ENCODE measurements at regions of chr11 and their contacts with region 1.

Region 1: GRCh38 chr11:65569973-65570918 is at the start of gene ZNRD2:
- DNase-seq: peak; percentile 99
- ATAC-seq: peak; percentile 70
- H3K4me3 ChIP-seq: peak within 1 kb of the TSS; percentile 79
- H3K27ac ChIP-seq: peak within 1 kb of the TSS; percentile 78
- H3K4me1 ChIP-seq: peaks cover 19% of the 10 kb centered on the region
- H3K27me3 ChIP-seq: no peaks in the 10 kb centered on the region
- CTCF ChIP-seq: peak; percentile 76
- POLR2A ChIP-seq: peak; percentile 73
- RAD21 ChIP-seq: peak; percentile 64
- total RNA-seq, gene ZNRD2: 69.7 and 75.6 TPM in 2 replicates

Region 2: DNA sequence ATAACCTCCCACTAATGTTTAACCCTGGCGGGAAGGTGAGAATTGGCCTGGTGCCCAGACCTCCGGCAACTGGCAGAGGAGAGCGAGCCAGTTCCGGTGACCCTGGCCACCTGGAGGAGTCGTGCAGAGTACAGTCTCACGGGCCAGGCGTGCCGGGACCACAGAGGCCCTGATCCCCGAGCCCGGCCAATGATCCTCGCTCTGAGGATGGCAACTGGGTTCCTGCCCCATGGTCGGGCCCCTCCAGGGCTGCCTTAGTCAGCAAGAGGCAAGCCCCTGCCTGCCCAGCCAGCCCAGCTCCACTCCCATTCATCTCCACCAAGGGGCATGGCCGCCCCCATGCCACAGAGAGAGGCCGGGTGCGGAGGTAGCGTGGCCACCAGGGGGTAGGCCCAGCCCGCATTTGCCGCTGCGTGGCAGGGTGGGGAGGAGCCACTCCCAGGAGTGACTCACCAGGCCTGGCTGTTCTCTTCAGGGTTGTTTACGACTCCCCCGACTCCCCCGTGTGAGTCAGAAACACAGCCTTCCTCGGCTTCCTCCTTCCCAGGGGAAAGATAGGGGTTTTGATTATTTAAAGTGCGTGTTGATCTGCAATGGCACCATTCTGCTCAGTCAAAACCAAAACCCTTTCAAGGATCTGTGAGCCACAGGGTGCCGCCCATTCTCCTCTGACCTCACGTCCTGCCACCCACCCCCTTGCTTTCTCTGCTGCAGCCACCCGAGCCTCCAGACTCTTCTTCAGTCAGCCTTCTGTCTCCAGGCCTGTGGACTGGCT is 188.0 kb before region 1 on chr11 and contains the start of gene SLC25A45:
- CTCF ChIA-PET with region 1: no interaction called
- POLR2A ChIA-PET with region 1: no interaction called
- dilution Hi-C with region 1: no loop called
- in situ Hi-C with region 1: no loop called
- intact Hi-C with region 1: loop called (anchors 5 kb)
- DNase-seq: peak; percentile 99
- ATAC-seq: peak; percentile 84
- H3K4me3 ChIP-seq: peak within 1 kb of the TSS; percentile 21
- H3K27ac ChIP-seq: peak within 1 kb of the TSS; percentile 89
- H3K4me1 ChIP-seq: peaks cover 27% of the 10 kb centered on the region
- H3K27me3 ChIP-seq: no peaks in the 10 kb centered on the region
- CTCF ChIP-seq: peak; percentile 88
- POLR2A ChIP-seq: peak; percentile 52; the same call in 1 of the 2 replicates
- RAD21 ChIP-seq: peak; percentile 86
- total RNA-seq, gene SLC25A45: 0.56 and 0.72 TPM in 2 replicates

Region 3: DNA sequence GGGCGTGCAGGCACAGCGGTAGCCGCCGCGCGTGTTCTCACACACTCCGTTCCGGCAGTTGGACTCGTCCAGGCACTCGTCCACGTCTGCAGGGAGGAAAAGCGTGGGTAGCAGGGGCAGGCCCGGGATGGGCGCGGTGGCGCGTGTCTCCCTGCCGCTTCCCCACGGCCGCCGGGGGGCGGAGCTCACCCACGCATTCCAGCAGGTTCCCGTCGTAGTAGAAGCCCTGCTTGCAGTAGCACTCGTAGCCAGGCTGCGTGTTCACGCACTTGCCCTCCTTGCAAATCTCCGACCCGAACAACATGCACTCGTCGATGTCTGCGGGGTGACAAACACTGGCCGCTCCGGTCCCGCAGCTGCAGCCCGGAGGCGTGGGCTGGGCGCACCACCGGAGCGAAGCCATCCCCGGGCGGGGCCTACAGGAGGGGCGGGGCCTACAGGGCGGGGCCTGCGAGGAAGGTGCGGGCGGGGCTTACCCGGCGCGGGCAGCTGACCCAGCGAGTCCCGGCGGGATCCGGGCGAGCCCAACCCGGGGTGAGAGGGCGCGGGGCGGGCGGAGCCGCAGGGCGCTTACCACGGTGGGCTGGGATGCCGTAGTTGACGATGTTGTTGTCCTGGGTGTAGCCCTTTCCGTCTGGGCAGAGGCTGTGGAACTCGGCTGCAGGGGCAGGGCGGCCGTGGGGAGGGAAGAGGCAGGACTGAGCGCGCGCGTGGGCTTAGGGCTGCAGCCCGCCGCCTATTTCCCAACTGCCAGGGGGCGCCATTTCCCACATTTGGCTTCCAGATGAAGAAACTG is 29.8 kb before region 1 on chr11:
- CTCF ChIA-PET with region 1: interaction called, 15 read pairs
- POLR2A ChIA-PET with region 1: no interaction called
- dilution Hi-C with region 1: no loop called
- in situ Hi-C with region 1: no loop called
- intact Hi-C with region 1: loop called (anchors 1 kb)
- DNase-seq: peak; percentile 82
- ATAC-seq: peak; percentile 94
- H3K4me3 ChIP-seq: peak overlapping the region; percentile 59
- H3K27ac ChIP-seq: peak overlapping the region; percentile 73
- H3K4me1 ChIP-seq: peaks cover 5% of the 10 kb centered on the region; the same call in 1 of the 2 replicates
- H3K27me3 ChIP-seq: no peaks in the 10 kb centered on the region
- CTCF ChIP-seq: peak; percentile 88
- POLR2A ChIP-seq: no peak
- RAD21 ChIP-seq: peak; percentile 77

Region 4: DNA sequence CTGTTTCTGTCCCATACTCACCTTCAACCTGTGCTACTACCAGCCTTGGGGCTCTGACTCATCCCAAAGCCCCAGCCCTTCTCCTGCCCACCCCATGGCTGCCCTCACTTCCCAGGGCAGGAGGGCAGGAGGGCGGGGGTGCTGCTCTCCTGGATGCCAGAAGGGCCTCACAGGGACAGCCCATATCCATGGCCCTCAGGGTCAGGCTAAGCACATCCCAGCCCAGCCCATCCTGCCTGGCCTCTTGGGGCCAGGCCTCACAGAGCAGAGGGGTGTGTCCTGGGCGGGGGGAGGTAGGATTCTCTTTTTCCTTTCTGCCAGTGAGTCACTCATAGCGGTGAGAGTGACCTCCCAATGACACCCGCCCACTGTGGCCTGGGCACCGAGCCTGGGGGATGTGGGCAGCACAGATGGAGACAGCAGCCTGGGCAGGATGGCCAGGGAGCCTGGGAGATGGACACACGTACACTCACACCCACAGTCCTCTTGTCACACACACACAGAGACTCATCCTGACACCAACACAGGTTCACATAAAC is 14.5 kb before region 1 on chr11:
- CTCF ChIA-PET with region 1: interaction called, 4 read pairs
- POLR2A ChIA-PET with region 1: no interaction called
- dilution Hi-C with region 1: no loop called
- in situ Hi-C with region 1: no loop called
- intact Hi-C with region 1: loop called (anchors 2 kb)
- DNase-seq: peak; percentile 88
- ATAC-seq: peak; percentile 45
- H3K4me3 ChIP-seq: no peak overlapping the region
- H3K27ac ChIP-seq: peak overlapping the region; percentile 9; the same call in 1 of the 2 replicates
- H3K4me1 ChIP-seq: peaks cover 38% of the 10 kb centered on the region
- H3K27me3 ChIP-seq: no peaks in the 10 kb centered on the region
- CTCF ChIP-seq: no peak
- POLR2A ChIP-seq: no peak
- RAD21 ChIP-seq: no peak

Region 5: GRCh38 chr11:65606876-65607613 is 36.8 kb after region 1 on chr11:
- CTCF ChIA-PET with region 1: no interaction called
- POLR2A ChIA-PET with region 1: no interaction called
- dilution Hi-C with region 1: no loop called
- in situ Hi-C with region 1: no loop called
- intact Hi-C with region 1: loop called (anchors 5 kb)
- DNase-seq: peak; percentile 93
- ATAC-seq: peak; percentile 100
- H3K4me3 ChIP-seq: peak overlapping the region; percentile 20; the same call in 1 of the 2 replicates
- H3K27ac ChIP-seq: no peak overlapping the region
- H3K4me1 ChIP-seq: peaks cover 9% of the 10 kb centered on the region
- H3K27me3 ChIP-seq: no peaks in the 10 kb centered on the region
- CTCF ChIP-seq: no peak
- POLR2A ChIP-seq: no peak
- RAD21 ChIP-seq: no peak

Measured in IMR-90 (cell line).